AG04450 (cell line): ENCODE measurements at regions of chr5 and their contacts with region 1.

Region 1: GRCh38 chr5:81194633-81195333 is 38.3 kb upstream of the CKMT2 start:
- DNase-seq: peak; percentile 43
- H3K4me3 ChIP-seq: 0 out of 2 replicates have a peak overlapping the region, but pooled peaks have one; percentile 31
- H3K27ac ChIP-seq: no peak overlapping the region
- H3K27me3 ChIP-seq: no peaks in the 10 kb centered on the region
- CTCF ChIP-seq: peak; percentile 99

Region 2: GRCh38 chr5:80686757-80687156 is 508.0 kb before region 1 on chr5:
- CTCF ChIA-PET with region 1: interaction called, 85 read pairs
- POLR2A ChIA-PET with region 1: no interaction called
- DNase-seq: no peak
- H3K4me3 ChIP-seq: no peak overlapping the region
- H3K27ac ChIP-seq: no peak overlapping the region
- H3K27me3 ChIP-seq: no peaks in the 10 kb centered on the region
- CTCF ChIP-seq: peak; percentile 44

Region 3: GRCh38 chr5:80711938-80712337 is 482.8 kb before region 1 on chr5:
- CTCF ChIA-PET with region 1: interaction called, 41 read pairs
- POLR2A ChIA-PET with region 1: no interaction called
- DNase-seq: no peak
- H3K4me3 ChIP-seq: no peak overlapping the region
- H3K27ac ChIP-seq: no peak overlapping the region
- H3K27me3 ChIP-seq: no peaks in the 10 kb centered on the region
- CTCF ChIP-seq: peak; percentile 68

Region 4: DNA sequence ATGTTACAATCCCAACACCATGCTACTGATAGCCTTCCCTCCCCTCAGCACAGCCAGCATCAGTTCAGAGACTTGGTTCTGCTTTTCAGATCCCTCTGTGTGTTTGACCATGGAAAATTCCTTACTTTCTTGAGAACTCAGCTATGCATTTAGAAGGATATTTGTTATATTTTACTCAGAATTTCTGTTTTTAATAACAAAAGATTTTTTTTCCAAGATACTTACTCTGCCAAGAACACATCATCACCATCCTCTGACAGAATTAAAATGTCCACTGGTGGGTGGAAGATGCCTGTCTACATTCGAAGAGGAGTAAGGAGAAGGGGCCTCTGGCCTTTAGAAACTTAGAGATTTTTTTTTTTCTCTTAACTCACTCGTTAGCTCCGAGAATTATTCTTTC is 17.7 kb before region 1 on chr5:
- CTCF ChIA-PET with region 1: interaction called, 12 read pairs
- POLR2A ChIA-PET with region 1: no interaction called
- DNase-seq: no peak
- H3K4me3 ChIP-seq: no peak overlapping the region
- H3K27ac ChIP-seq: no peak overlapping the region
- H3K27me3 ChIP-seq: no peaks in the 10 kb centered on the region
- CTCF ChIP-seq: no peak

Region 5: DNA sequence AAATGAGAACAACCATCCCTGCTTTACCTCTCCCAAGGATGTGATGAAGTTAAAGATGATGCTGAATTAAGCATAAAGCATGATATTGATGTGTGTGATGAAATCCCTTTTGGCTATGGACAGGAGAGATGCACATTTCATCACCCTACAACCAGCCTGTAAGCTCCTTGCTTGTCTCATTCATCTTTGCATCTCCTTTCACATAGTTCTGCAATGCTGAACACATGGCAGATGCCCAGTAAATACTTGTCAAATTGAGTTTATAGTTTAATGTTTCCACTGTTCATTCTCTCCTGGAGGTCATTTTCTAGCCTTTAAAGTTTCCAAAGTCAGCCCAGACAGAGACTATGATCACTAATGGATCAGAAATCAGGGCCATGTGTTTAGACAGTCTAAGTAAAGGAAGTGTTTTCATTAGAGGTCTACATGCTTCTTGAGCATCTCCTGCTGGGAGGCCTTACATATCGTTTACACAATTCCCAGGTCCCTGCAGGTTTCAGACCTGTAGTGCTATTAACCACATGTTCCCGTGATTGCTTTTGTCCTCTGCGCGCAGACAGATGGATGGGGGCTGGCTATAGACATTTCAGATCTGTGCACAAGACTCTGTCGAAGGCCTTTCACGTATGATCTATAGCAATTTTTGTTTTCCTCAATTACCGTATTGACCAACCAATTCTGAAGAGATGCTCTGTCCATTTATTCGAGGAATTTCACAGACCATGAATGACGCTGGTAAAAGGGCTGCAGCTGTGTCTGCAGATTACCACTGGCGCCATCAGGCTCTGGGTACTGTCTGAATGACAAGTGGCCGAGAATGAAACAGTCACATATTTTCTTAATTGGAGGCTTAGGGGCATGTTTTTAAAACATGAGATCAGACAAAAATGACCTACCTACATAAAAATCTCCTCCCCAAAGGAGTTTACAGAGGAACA is 10.7 kb before region 1 on chr5:
- CTCF ChIA-PET with region 1: interaction called, 15 read pairs
- POLR2A ChIA-PET with region 1: no interaction called
- DNase-seq: no peak
- H3K4me3 ChIP-seq: no peak overlapping the region
- H3K27ac ChIP-seq: no peak overlapping the region
- H3K27me3 ChIP-seq: no peaks in the 10 kb centered on the region
- CTCF ChIP-seq: no peak

Region 6: DNA sequence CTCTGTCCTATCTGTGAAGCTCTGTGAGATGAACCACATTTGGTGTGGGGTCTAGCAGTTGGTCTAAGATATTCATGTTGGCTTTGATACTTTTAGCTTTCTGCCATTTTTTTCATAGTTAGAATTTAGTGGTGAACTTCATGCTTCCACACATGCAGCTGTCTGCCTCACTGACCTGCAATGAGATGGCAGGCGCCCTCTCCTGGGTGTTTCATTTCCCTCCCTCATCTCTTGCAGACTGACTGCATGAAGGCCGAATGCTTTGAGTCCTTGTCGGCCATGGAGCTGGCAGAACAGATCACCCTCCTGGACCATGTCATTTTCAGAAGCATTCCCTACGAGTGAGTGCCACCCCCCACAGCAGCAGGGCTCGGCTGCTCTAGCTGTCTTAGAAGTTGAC is 12.2 kb after region 1 on chr5:
- CTCF ChIA-PET with region 1: interaction called, 57 read pairs
- POLR2A ChIA-PET with region 1: no interaction called
- DNase-seq: no peak
- H3K4me3 ChIP-seq: no peak overlapping the region
- H3K27ac ChIP-seq: no peak overlapping the region
- H3K27me3 ChIP-seq: no peaks in the 10 kb centered on the region
- CTCF ChIP-seq: peak; percentile 38

Region 7: DNA sequence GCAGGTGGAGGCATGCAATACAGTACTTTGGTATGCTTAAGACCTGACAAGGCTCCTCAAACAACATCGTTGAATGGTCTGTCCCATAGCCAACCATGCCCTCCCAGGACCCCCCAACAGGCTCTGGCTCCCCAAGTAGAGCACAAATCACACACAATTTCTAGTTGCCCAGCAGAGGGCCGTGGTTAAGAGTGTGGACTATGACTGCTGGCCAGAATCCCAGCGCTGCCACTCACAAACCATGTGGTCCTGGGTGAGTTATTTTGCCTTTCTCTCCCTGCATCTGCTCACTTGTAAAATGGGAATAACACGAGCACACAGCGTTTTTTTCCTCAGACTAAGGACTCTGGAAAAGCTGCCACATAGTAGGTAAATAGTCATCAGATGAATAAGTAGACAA is 44.8 kb after region 1 on chr5:
- CTCF ChIA-PET with region 1: no interaction called
- POLR2A ChIA-PET with region 1: no interaction called
- DNase-seq: no peak
- H3K4me3 ChIP-seq: no peak overlapping the region
- H3K27ac ChIP-seq: no peak overlapping the region
- H3K27me3 ChIP-seq: no peaks in the 10 kb centered on the region
- CTCF ChIP-seq: no peak